ENCODE measurements at regions of chr15 and their contacts with region 1.

Region 1: DNA sequence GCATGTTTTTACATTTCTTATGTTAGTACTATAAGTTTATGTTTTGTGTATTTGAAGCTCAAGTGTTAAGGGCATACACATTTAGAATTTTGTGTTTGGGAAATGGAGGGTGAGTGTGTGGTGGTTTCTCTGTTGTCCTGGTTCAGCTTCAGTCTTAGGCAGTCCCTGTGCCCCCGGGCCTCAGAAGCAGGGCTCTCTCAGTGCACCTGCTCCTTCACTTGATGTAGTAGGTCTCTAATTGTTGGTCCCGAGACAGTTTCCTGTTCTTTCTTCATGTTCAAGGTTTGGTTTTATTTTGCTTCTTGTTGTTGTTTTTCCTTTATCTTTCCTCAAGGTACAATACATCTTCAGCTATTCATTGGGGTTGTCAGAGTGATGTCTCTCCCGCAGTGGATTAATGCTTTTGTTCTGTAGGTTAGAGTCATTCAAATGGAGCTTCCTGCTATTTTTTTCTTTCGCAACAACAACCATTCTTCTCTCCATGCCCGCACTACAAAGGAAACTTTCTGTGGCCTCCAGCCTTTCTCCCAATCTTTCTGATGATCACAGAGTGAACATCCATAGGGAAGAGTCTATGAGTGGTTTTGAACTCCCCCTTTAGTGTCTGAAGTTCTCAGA is 177.8 kb upstream of the GOLGA6L4 start:
- DNase-seq: no peak
- ATAC-seq: no peak
- H3K4me3 ChIP-seq: no peak overlapping the region
- H3K27ac ChIP-seq: no peak overlapping the region
- H3K4me1 ChIP-seq: no peaks in the 10 kb centered on the region
- H3K27me3 ChIP-seq: no peaks in the 10 kb centered on the region
- CTCF ChIP-seq: no peak
- EP300 ChIP-seq: no peak
- POLR2A ChIP-seq: no peak
- RAD21 ChIP-seq: no peak

Region 2: DNA sequence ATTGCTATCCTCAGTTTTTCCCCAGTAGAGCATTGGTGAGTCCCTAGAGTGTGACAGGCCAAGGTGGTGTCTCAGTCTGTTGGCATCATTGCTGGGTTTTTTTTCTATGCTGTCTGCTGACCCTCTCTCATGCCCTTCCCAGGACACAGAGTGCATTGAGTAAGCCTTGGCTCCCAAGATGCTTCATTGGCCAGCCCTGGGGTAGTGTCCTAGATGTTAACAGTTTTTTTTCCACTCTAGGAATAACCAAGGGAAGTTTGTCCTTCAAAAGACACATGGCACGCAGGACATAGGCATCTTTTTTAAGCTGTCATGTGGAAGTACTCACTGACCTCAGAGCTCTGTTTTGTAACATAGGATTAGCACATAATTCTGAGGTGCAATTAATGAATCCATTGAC is 384.4 kb before region 1 on chr15:
- CTCF ChIA-PET with region 1: no interaction called
- POLR2A ChIA-PET with region 1: interaction called, 12 read pairs
- RAD21 ChIA-PET with region 1: no interaction called
- SMC1A ChIA-PET with region 1: no interaction called
- in situ Hi-C with region 1: no loop called
- intact Hi-C with region 1: no loop called
- DNase-seq: no peak
- ATAC-seq: no peak
- H3K4me3 ChIP-seq: no peak overlapping the region
- H3K27ac ChIP-seq: no peak overlapping the region
- H3K4me1 ChIP-seq: no peaks in the 10 kb centered on the region
- H3K27me3 ChIP-seq: no peaks in the 10 kb centered on the region; a peak in 1 of 4 replicates
- CTCF ChIP-seq: no peak
- EP300 ChIP-seq: no peak
- POLR2A ChIP-seq: no peak
- RAD21 ChIP-seq: no peak

Region 3: DNA sequence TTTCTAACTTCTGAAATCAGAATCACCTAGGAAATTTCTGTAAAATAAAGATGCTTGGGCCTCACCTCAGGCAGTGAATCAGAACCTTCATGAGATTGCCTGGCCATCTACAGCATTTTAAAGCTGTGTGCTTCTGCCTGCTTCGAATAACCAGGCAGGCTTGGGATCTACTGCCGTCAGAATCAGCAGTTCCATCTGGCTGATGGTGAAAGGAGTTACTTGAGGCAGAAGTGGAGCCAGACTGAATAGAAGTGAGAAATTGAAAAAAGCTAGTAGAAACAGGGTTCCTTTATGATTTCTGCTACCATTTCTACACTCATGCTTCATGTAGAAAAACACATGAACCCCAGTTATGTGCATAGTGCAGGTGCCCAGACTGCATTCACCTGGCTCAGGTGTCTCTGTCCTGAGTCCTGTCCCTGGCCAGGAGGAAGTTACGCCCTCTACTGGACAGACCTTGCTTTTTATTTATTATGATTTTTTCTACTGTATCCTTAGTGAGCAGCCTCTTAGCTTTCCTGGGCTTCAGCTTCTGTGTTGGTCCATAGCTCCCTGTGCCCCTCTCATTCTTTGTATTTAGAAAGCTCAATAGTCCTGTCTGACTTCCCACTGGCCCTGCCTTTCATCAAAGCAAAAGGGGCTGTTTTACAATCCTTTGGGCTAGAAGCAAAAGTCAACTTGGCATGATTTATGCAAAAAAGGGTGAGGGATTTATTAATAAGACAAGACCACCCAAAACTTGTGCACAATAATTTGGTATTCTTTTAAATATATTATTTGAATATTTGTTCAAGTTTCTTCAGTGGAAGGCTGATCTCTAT is 23.0 kb before region 1 on chr15:
- CTCF ChIA-PET with region 1: no interaction called
- POLR2A ChIA-PET with region 1: no interaction called
- RAD21 ChIA-PET with region 1: no interaction called
- SMC1A ChIA-PET with region 1: no interaction called
- in situ Hi-C with region 1: no loop called
- intact Hi-C with region 1: no loop called
- DNase-seq: no peak
- ATAC-seq: peak; percentile 84
- H3K4me3 ChIP-seq: no peak overlapping the region
- H3K27ac ChIP-seq: no peak overlapping the region
- H3K4me1 ChIP-seq: no peaks in the 10 kb centered on the region
- H3K27me3 ChIP-seq: no peaks in the 10 kb centered on the region
- CTCF ChIP-seq: peak; percentile 45 to 66 (median 46); a peak in 5 of 6 replicates
- EP300 ChIP-seq: no peak
- POLR2A ChIP-seq: no peak
- RAD21 ChIP-seq: peak; percentile 42